ENCODE measurements at regions of chr1 and their contacts with region 1.

Region 1: DNA sequence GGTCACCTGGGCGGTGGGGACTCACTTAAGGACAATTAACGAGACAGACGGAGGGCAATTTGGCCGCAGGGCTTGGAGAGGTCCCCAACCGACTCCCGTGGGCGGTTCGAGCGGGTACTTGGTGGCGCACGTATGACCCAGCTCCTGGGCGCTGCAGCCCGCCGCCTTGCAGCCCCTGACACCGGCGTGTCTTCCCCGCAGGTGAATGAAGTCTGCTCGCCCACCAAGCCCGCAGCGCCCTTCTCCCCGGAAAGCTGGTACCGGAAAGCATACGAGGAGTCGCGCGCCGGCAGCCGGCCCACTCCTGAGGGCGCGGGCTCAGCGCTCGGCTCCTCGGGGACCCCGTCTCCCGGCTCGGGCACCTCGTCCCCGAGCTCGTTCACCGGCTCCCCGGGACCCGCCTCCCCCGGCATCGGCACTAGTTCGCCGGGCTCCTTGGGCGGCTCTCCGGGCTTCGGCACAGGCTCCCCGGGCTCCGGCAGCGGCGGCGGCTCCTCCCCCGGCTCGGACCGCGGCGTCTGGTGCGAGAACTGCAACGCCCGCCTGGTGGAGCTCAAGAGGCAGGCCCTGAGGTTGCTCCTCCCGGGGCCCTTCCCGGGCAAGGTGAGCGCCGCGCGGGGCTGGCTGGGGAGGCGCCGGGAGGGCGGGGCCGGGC is 1.4 kb downstream of the KIF26B start:
- DNase-seq: peak; percentile 72
- ATAC-seq: peak; percentile 93
- H3K4me3 Mint-ChIP-seq: peak overlapping the region; percentile 79
- H3K27ac Mint-ChIP-seq: no peak overlapping the region
- H3K4me1 Mint-ChIP-seq: peaks cover 28% of the 10 kb centered on the region
- H3K27me3 Mint-ChIP-seq: peaks cover 36% of the 10 kb centered on the region
- CTCF ChIP-seq: no peak

Region 2: GRCh38 chr1:244451951-244452795 is 704.0 kb before region 1 on chr1:
- CTCF ChIA-PET with region 1: no interaction called
- POLR2A ChIA-PET with region 1: no interaction called
- intact Hi-C with region 1: loop called (anchors 10 kb)
- DNase-seq: peak; percentile 97
- ATAC-seq: peak; percentile 94
- H3K4me3 Mint-ChIP-seq: peak overlapping the region; percentile 95
- H3K27ac Mint-ChIP-seq: peak overlapping the region; percentile 78
- H3K4me1 Mint-ChIP-seq: peaks cover 32% of the 10 kb centered on the region
- H3K27me3 Mint-ChIP-seq: no peaks in the 10 kb centered on the region
- CTCF ChIP-seq: no peak

Region 3: DNA sequence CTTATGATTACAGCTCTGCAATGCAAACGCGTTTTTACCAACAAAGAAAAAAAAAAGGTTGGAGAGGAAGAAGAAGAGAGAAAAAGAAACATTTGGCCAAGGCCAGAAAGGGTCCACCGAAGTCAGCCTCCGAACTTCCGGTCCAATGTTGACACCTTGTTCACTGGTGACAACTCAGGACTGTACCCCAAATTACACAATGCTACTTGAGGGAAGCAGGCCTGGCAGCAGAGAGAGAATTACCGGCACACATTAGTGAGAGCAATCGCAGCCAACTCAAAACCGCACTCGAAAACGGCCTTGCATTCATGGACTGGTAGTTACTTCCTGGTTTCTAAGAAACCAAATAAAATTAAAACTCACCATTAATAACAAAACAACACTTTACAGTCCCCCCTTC is 651.1 kb after region 1 on chr1:
- CTCF ChIA-PET with region 1: no interaction called
- POLR2A ChIA-PET with region 1: no interaction called
- intact Hi-C with region 1: loop called (anchors 10 kb)
- DNase-seq: no peak
- ATAC-seq: peak; percentile 59
- H3K4me3 Mint-ChIP-seq: peak overlapping the region; percentile 69
- H3K27ac Mint-ChIP-seq: peak overlapping the region; percentile 91
- H3K4me1 Mint-ChIP-seq: peaks cover 63% of the 10 kb centered on the region
- H3K27me3 Mint-ChIP-seq: no peaks in the 10 kb centered on the region
- CTCF ChIP-seq: no peak

Region 4: DNA sequence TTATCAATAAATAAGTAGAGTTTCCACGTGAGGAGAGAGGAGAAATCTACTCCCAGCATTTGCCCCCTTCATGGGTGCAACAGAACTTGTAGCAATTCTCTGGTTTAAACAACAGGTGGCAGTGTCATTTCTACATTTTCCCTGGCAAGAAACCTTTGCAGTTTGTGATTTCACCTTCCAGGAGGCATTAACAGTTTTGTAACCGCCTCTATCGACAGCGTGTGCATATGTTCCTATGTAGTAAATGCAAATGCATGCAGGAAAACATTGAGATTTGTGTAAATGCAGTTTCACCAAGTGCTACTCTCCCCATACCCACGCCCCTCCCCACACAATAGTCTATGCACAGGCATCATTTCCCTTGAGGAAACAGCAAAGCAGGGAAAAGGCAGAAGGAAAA is 856.1 kb after region 1 on chr1:
- CTCF ChIA-PET with region 1: interaction called, 74 read pairs
- POLR2A ChIA-PET with region 1: interaction called, 3 read pairs
- intact Hi-C with region 1: no loop called
- DNase-seq: no peak
- ATAC-seq: no peak
- H3K4me3 Mint-ChIP-seq: no peak overlapping the region
- H3K27ac Mint-ChIP-seq: no peak overlapping the region
- H3K4me1 Mint-ChIP-seq: no peaks in the 10 kb centered on the region
- H3K27me3 Mint-ChIP-seq: no peaks in the 10 kb centered on the region
- CTCF ChIP-seq: no peak

Region 5: GRCh38 chr1:246450611-246451251 is 1294.5 kb after region 1 on chr1:
- CTCF ChIA-PET with region 1: interaction called, 9 read pairs
- POLR2A ChIA-PET with region 1: no interaction called
- intact Hi-C with region 1: loop called (anchors 1 kb)
- DNase-seq: no peak
- ATAC-seq: no peak
- H3K4me3 Mint-ChIP-seq: no peak overlapping the region
- H3K27ac Mint-ChIP-seq: no peak overlapping the region
- H3K4me1 Mint-ChIP-seq: no peaks in the 10 kb centered on the region
- H3K27me3 Mint-ChIP-seq: no peaks in the 10 kb centered on the region
- CTCF ChIP-seq: no peak

Region 6: DNA sequence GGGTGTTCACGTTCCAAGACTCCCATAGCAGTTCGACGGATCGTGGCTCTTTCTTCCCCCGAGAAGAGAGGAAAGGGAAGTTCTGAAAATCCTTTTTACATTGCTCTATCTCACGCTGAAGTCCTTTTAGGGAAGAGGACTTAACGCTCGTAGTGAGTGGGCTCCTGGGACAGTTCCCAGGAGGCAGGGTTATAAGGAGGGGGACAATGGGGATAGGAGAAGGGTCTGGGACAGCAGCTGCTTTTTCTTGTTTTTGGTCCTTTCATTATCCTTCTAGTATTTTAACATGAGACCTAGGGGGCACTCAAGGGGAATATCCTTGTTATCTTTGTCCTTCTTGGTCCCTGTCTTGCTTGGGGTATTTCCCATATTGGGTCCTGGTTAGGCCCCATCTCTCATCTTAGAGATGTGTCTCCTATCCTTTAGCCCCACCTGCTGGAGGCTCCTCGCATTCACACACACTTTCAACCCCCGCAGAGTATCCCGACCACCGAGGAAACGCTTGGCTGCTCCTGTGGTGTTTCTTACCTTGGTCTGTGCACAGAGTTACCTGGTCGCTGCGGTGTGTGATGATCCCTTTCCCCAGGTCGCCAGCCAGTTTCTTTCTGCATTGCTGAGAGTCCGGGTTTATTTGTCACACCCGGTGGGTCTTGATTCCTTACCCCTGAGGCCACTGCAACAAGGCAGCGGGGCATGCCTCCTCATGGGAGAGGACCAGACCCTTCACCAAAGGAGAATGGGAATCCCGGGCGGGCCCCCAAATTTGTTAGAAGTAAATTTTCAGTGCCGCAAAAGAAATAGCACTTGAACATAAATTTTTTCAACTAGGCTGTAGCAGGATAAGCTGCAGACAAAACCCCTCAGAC is 1597.7 kb after region 1 on chr1:
- CTCF ChIA-PET with region 1: no interaction called
- POLR2A ChIA-PET with region 1: interaction called, 3 read pairs
- intact Hi-C with region 1: loop called (anchors 1 kb)
- DNase-seq: peak; percentile 34
- ATAC-seq: peak; percentile 93
- H3K4me3 Mint-ChIP-seq: no peak overlapping the region
- H3K27ac Mint-ChIP-seq: no peak overlapping the region
- H3K4me1 Mint-ChIP-seq: peaks cover 4% of the 10 kb centered on the region
- H3K27me3 Mint-ChIP-seq: no peaks in the 10 kb centered on the region
- CTCF ChIP-seq: no peak